MCF 10A (cell line): ENCODE measurements at regions of chr6 and their contacts with region 1.

Region 1: DNA sequence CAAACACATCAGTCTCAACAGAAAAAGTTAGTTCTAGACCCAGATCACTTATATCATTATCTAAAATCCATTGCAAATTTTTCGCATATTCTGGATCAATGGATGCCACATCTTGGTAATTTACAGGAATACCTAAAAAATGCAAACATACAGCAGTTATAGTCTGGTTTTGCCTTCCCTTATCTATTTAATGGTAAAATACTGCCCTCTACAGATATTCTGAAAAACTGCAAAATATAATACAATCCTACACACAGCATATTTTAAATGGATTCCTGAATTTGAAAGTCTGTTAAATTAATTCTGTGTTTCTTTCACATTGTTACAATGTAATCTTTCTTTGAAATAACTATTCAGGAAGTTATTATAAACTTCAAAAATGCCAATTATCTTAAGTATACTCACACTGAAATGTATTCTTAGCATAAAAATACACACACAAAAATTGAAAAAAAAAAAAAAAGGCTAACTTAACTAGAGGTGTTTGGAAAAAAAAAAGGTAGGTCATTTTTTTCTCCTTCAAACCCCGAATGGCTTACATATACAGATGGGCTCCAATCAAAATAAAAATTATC is 88.4 kb downstream of the HACE1 start:
- DNase-seq: peak; percentile 40
- H3K4me3 Mint-ChIP-seq: no peak overlapping the region
- H3K27ac Mint-ChIP-seq: no peak overlapping the region
- H3K4me1 Mint-ChIP-seq: peaks cover 5% of the 10 kb centered on the region
- H3K27me3 Mint-ChIP-seq: no peaks in the 10 kb centered on the region
- CTCF ChIP-seq: peak; percentile 60

Region 2: DNA sequence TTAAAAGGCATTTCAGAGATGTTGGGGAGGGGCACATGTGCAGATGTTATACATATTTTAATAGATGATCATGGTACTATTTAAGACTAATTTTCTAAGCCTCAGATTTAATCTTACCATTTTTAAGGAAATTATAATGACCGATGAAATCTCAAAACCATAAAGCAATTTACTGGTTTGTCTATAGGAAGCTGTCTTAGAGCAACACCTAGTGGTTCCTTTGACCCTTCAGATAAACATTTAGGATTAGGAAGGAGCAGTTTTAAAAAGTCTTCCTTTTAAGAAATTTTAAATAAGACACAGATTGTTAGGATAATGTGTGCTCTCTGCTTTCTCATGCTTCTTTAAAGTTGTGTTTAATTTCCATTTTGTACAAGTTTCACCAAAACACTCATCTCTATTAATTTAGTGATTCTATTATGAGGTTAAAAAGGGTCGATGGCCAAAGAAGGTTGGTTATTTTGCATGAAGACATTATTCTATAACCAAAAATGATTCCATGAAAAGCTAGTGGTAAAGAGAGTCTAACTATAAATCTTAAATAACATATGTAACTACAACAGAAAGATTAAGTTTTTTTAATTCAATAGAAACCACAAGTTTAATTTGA is 288.0 kb before region 1 on chr6:
- CTCF ChIA-PET with region 1: no interaction called
- POLR2A ChIA-PET with region 1: no interaction called
- intact Hi-C with region 1: loop called (anchors 5 kb)
- DNase-seq: peak; percentile 47
- H3K4me3 Mint-ChIP-seq: no peak overlapping the region
- H3K27ac Mint-ChIP-seq: no peak overlapping the region
- H3K4me1 Mint-ChIP-seq: no peaks in the 10 kb centered on the region
- H3K27me3 Mint-ChIP-seq: no peaks in the 10 kb centered on the region
- CTCF ChIP-seq: peak; percentile 54

Region 3: DNA sequence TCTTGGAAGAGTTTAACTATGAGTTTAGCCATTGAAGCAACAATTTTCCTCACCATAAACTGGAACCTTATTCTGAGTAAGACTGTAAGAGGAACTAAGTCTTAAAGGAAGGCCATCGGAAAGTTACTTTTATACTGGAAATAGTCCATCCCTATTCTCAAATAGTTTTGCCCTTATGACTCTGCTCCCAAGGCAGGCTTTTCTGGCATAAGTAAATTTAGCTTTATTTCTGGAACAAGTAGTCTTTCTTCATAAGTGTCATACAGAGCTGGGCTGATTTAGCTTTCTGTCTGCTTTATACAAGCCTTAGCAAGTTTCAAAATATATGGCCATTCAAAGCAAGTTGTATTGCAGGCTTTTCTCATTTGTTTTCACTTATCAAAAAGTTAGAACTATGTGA is 239.7 kb before region 1 on chr6:
- CTCF ChIA-PET with region 1: interaction called, 16 read pairs
- POLR2A ChIA-PET with region 1: interaction called, 6 read pairs
- intact Hi-C with region 1: loop called (anchors 1 kb)
- DNase-seq: no peak
- H3K4me3 Mint-ChIP-seq: no peak overlapping the region
- H3K27ac Mint-ChIP-seq: no peak overlapping the region
- H3K4me1 Mint-ChIP-seq: peaks cover 27% of the 10 kb centered on the region
- H3K27me3 Mint-ChIP-seq: no peaks in the 10 kb centered on the region
- CTCF ChIP-seq: no peak

Region 4: GRCh38 chr6:104653781-104654180 is 117.6 kb before region 1 on chr6:
- CTCF ChIA-PET with region 1: no interaction called
- POLR2A ChIA-PET with region 1: no interaction called
- intact Hi-C with region 1: no loop called
- DNase-seq: no peak
- H3K4me3 Mint-ChIP-seq: no peak overlapping the region
- H3K27ac Mint-ChIP-seq: no peak overlapping the region
- H3K4me1 Mint-ChIP-seq: no peaks in the 10 kb centered on the region
- H3K27me3 Mint-ChIP-seq: no peaks in the 10 kb centered on the region
- CTCF ChIP-seq: no peak